Activated naive CD4-positive, alpha-beta T cell treated with anti-CD3 and anti-CD28 coated beads for 36 hours (primary cell): ENCODE measurements at regions of chr12 and their contacts with region 1.

Region 1: GRCh38 chr12:6752921-6753771 is at the start of gene MLF2:
- DNase-seq: peak; percentile 99
- H3K4me3 Mint-ChIP-seq: peak within 1 kb of the TSS; percentile 96
- H3K27ac Mint-ChIP-seq: peak within 1 kb of the TSS; percentile 97
- H3K4me1 Mint-ChIP-seq: peaks cover 25% of the 10 kb centered on the region
- H3K27me3 Mint-ChIP-seq: no peaks in the 10 kb centered on the region
- total RNA-seq, gene MLF2: 140 to 143 TPM

Region 2: GRCh38 chr12:6563448-6564050 is 189.6 kb before region 1 on chr12:
- CTCF ChIA-PET with region 1: no interaction called
- intact Hi-C with region 1: loop called (anchors 1 kb)
- DNase-seq: peak; percentile 79
- H3K4me3 Mint-ChIP-seq: no peak overlapping the region
- H3K27ac Mint-ChIP-seq: peak overlapping the region; percentile 36
- H3K4me1 Mint-ChIP-seq: peaks cover 39% of the 10 kb centered on the region
- H3K27me3 Mint-ChIP-seq: no peaks in the 10 kb centered on the region

Region 3: GRCh38 chr12:6735448-6736191 is 17.5 kb before region 1 on chr12:
- CTCF ChIA-PET with region 1: interaction called, 11 read pairs
- intact Hi-C with region 1: no loop called
- DNase-seq: peak; percentile 72
- H3K4me3 Mint-ChIP-seq: no peak overlapping the region
- H3K27ac Mint-ChIP-seq: peak overlapping the region; percentile 53
- H3K4me1 Mint-ChIP-seq: peaks cover 6% of the 10 kb centered on the region
- H3K27me3 Mint-ChIP-seq: no peaks in the 10 kb centered on the region

Region 4: GRCh38 chr12:6778574-6779550 is 25.7 kb after region 1 on chr12:
- CTCF ChIA-PET with region 1: interaction called, 118 read pairs
- intact Hi-C with region 1: loop called (anchors 1 kb)
- DNase-seq: peak; percentile 96
- H3K4me3 Mint-ChIP-seq: peak overlapping the region; percentile 82
- H3K27ac Mint-ChIP-seq: peak overlapping the region; percentile 63
- H3K4me1 Mint-ChIP-seq: peaks cover 89% of the 10 kb centered on the region
- H3K27me3 Mint-ChIP-seq: no peaks in the 10 kb centered on the region

Region 5: GRCh38 chr12:6813363-6813762 is 60.2 kb after region 1 on chr12:
- CTCF ChIA-PET with region 1: interaction called, 12 read pairs
- intact Hi-C with region 1: no loop called
- DNase-seq: no peak
- H3K4me3 Mint-ChIP-seq: no peak overlapping the region
- H3K27ac Mint-ChIP-seq: no peak overlapping the region
- H3K4me1 Mint-ChIP-seq: peaks cover 17% of the 10 kb centered on the region
- H3K27me3 Mint-ChIP-seq: no peaks in the 10 kb centered on the region

Region 6: DNA sequence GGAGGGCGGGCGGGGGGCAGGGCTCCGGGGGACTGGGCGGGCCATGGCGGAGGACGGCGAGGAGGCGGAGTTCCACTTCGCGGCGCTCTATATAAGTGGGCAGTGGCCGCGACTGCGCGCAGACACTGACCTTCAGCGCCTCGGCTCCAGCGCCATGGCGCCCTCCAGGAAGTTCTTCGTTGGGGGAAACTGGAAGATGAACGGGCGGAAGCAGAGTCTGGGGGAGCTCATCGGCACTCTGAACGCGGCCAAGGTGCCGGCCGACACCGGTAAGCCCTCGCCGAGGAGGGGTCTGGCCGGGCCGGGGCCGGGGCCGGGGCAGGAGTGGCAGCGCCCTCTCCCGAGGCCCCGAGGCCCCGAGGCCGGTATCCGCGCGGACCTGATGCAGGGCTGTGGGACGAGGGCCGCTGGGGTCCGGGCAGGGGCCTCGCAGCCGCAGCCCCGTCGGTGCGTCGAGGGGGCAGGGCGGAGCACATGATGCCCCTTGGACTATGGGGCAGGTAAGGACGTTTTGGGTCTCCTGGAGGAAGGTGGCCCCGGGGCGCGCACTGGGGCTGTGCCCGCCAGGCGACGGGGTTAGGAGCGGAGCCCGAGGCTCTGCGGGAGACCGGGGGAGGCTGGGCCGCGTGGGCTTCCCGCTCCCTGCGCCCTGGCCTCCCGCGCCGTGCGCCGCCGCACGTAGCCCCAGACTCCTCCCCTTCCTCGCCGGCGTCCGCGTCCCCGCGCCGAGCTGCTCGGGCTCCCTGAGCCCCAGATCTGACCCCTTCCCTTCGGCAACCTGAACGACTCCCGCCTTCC is 114.5 kb after region 1 on chr12 and contains the start of gene TPI1:
- CTCF ChIA-PET with region 1: interaction called, 4 read pairs
- intact Hi-C with region 1: loop called (anchors 1 kb)
- DNase-seq: peak; percentile 79
- H3K4me3 Mint-ChIP-seq: peak within 1 kb of the TSS; percentile 98
- H3K27ac Mint-ChIP-seq: peak within 1 kb of the TSS; percentile 94
- H3K4me1 Mint-ChIP-seq: peaks cover 52% of the 10 kb centered on the region
- H3K27me3 Mint-ChIP-seq: no peaks in the 10 kb centered on the region
- total RNA-seq, gene TPI1: 1,222 to 1,282 TPM